IMR-90 (cell line): ENCODE measurements at regions of chr5 and their contacts with region 1.

Region 1: DNA sequence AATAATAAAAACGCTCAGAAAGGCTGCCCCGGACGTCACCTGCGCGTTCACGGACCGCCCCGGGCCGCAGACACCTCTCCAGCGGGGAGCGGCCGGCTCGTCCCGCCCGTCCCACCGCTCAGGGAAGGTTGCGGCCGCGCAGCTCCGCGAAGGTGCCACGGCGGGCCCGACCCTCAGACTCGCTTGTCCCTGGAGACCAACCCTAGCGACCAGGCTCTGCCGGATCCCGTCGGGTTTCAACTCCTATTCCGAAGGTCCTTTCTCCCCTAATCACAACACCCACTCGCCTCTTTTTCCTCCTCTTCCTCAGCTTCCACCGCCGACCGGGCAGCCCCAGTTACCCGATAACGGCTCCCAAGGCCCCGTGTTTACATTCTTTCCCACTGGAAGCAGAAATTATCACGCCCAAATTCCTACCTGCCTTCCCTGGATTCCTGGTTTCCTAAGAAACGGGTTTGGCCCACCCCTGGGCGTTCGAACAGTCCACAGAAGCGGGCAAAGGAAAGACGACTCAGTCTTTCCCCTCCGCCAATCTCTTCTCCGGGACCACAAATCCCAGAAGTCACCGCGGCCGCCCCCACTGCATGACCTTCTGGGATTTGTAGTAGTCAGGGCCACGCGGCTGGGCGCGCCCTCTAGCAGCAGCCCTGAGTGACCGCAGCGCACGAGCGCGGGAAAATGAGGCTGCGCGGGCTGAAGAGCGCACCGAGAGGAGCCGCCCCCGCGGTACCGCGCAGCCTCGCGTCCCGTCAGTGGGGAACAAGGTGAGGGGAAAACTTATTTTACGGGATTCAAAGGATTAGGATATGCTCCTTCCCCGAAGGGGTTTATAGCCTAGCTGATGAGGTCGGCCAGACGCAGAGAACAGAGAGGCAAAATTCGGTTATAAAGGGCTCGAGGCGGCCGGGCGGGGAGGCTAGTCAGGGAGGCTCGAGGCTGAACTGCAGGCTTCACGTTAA is at the start of gene TTC33:
- DNase-seq: peak; percentile 93
- ATAC-seq: peak; percentile 91
- H3K4me3 ChIP-seq: peak within 1 kb of the TSS; percentile 92
- H3K27ac ChIP-seq: peak within 1 kb of the TSS; percentile 88
- H3K4me1 ChIP-seq: peaks cover 4% of the 10 kb centered on the region; the same call in 1 of the 2 replicates
- H3K27me3 ChIP-seq: no peaks in the 10 kb centered on the region
- CTCF ChIP-seq: peak; percentile 80
- POLR2A ChIP-seq: peak; percentile 27; the same call in 1 of the 2 replicates
- RAD21 ChIP-seq: peak; percentile 38; the same call in 1 of the 2 replicates
- total RNA-seq, gene TTC33: 8.1 and 11.7 TPM in 2 replicates

Region 2: DNA sequence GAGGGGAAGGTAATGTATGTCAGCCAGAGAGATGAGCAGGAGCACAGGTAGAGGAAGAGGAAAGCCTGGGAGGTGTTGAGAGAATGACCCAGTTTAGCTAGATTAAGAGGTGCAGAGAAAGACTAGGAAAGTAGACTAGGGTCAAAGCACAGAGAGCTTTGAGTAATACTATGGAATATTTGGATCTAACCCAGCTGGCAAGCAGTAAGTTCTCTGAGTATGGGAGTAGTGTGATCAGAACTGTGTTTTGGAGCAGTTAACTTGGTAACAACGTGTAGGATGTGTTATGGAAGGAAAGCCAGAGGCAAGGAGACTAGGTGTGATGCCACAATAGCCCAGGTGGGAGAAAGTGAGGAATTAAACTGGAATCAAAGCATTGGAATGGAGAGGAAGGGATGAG is 160.9 kb before region 1 on chr5:
- CTCF ChIA-PET with region 1: no interaction called
- POLR2A ChIA-PET with region 1: no interaction called
- dilution Hi-C with region 1: no loop called
- in situ Hi-C with region 1: no loop called
- intact Hi-C with region 1: no loop called
- DNase-seq: peak; percentile 56
- ATAC-seq: peak; percentile 42; the same call in 1 of the 2 replicates
- H3K4me3 ChIP-seq: no peak overlapping the region
- H3K27ac ChIP-seq: no peak overlapping the region
- H3K4me1 ChIP-seq: peaks cover 3% of the 10 kb centered on the region; the same call in 1 of the 2 replicates
- H3K27me3 ChIP-seq: no peaks in the 10 kb centered on the region
- CTCF ChIP-seq: no peak
- POLR2A ChIP-seq: no peak
- RAD21 ChIP-seq: no peak

Region 3: DNA sequence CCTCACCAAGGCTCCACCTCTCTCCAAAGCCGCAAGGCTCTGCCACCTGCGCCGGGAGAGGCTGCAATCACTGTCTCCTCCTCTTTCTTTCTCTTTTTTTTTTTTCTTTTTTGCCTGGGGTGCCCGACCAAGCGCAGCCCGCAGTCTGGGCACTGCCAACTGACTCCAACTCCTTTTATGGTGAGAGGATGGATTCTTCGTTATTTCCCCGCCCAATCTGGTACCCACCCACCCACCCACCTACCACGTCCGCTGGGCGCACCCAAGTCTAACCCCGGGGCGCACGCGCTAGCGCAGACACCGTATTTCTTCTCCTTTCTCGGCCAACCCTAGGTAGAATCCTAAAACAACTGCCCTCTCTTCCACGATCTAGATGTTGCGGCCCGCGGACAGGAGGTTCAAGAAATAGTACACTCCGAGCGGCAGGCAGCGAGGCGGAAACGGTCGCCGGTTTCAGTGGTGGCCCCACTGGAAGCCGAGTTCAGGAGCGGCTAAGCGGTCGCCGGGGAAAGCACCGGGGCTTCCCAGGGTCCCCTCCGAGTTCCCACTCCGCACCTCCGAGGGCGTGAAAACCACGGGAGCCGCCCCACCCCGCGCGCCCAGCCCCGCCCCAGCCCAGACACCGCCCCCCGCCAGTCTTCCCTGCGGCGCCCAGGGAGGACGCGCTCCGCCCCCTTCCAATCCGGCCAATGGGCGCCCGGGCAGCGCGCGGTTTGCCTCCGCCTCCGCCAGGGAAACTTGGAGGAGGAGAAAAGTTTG is 76.4 kb before region 1 on chr5:
- CTCF ChIA-PET with region 1: no interaction called
- POLR2A ChIA-PET with region 1: no interaction called
- dilution Hi-C with region 1: no loop called
- in situ Hi-C with region 1: no loop called
- intact Hi-C with region 1: no loop called
- DNase-seq: peak; percentile 86
- ATAC-seq: peak; percentile 89
- H3K4me3 ChIP-seq: peak overlapping the region; percentile 94
- H3K27ac ChIP-seq: peak overlapping the region; percentile 98
- H3K4me1 ChIP-seq: peaks cover 13% of the 10 kb centered on the region
- H3K27me3 ChIP-seq: no peaks in the 10 kb centered on the region
- CTCF ChIP-seq: no peak
- POLR2A ChIP-seq: peak; percentile 51
- RAD21 ChIP-seq: no peak

Region 4: GRCh38 chr5:40775846-40776657 is 20.4 kb after region 1 on chr5:
- CTCF ChIA-PET with region 1: no interaction called
- POLR2A ChIA-PET with region 1: no interaction called
- dilution Hi-C with region 1: no loop called
- in situ Hi-C with region 1: no loop called
- intact Hi-C with region 1: loop called (anchors 2 kb)
- DNase-seq: no peak
- ATAC-seq: no peak
- H3K4me3 ChIP-seq: no peak overlapping the region
- H3K27ac ChIP-seq: no peak overlapping the region
- H3K4me1 ChIP-seq: peaks cover 4% of the 10 kb centered on the region
- H3K27me3 ChIP-seq: no peaks in the 10 kb centered on the region
- CTCF ChIP-seq: no peak
- POLR2A ChIP-seq: no peak
- RAD21 ChIP-seq: no peak

Region 5: GRCh38 chr5:40834849-40835787 is 79.4 kb after region 1 on chr5 and contains the start of gene RPL37:
- CTCF ChIA-PET with region 1: no interaction called
- POLR2A ChIA-PET with region 1: no interaction called
- dilution Hi-C with region 1: no loop called
- in situ Hi-C with region 1: no loop called
- intact Hi-C with region 1: loop called (anchors 2 kb)
- DNase-seq: peak; percentile 97
- ATAC-seq: peak; percentile 97
- H3K4me3 ChIP-seq: peak within 1 kb of the TSS; percentile 74
- H3K27ac ChIP-seq: peak within 1 kb of the TSS; percentile 89
- H3K4me1 ChIP-seq: peaks cover 2% of the 10 kb centered on the region; the same call in 1 of the 2 replicates
- H3K27me3 ChIP-seq: no peaks in the 10 kb centered on the region
- CTCF ChIP-seq: no peak
- POLR2A ChIP-seq: peak; percentile 98
- RAD21 ChIP-seq: no peak; the same call in 1 of the 2 replicates
- total RNA-seq, gene RPL37: 35.3 and 68.6 TPM in 2 replicates

Region 6: GRCh38 chr5:40904205-40904993 is 148.7 kb after region 1 on chr5:
- CTCF ChIA-PET with region 1: no interaction called
- POLR2A ChIA-PET with region 1: no interaction called
- dilution Hi-C with region 1: no loop called
- in situ Hi-C with region 1: no loop called
- intact Hi-C with region 1: no loop called
- DNase-seq: peak; percentile 83
- ATAC-seq: peak; percentile 98
- H3K4me3 ChIP-seq: no peak overlapping the region
- H3K27ac ChIP-seq: no peak overlapping the region
- H3K4me1 ChIP-seq: peaks cover 7% of the 10 kb centered on the region; the same call in 1 of the 2 replicates
- H3K27me3 ChIP-seq: no peaks in the 10 kb centered on the region
- CTCF ChIP-seq: peak; percentile 99
- POLR2A ChIP-seq: peak; percentile 48; the same call in 1 of the 2 replicates
- RAD21 ChIP-seq: peak; percentile 99